CD4-positive, alpha-beta memory T cell (primary cell): ENCODE measurements at regions of chr13 and their contacts with region 1.

Region 1: DNA sequence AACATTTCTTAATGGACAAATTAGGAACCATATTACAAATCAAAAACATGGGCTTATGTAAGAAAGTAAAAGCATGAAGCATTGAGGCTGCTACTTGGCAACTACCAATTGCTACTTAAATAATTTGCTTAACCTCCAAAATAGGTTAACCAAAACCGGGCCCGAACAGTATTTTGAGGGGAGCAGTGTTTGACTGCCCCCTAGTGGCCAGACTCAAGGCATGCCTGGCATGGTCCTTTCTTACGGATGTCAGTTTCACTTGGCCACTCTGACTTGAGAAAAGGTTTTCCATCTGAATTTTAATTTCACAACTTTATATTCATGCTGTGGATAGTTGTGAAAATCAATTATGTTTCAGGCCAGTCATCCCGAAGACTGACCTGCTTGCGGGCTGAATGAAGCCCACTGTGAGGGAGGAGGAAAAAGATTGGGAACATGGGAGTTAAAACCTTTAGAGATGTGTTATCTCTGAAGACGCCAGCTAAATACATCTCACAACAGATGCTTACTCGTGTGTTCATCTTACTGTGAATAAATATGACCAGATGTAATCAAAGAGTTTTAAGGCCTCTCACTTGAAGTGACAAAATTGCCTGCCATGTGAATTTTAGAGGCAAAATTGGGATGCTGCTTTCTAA is 2.9 kb downstream of the RXFP2 start:
- DNase-seq: peak; percentile 58 to 66 (median 61)
- H3K4me3 ChIP-seq: no peak overlapping the region
- H3K4me3 Mint-ChIP-seq: peak overlapping the region in 2 of 8 donors; percentile 37 to 58
- H3K27ac ChIP-seq: no peak overlapping the region
- H3K27ac Mint-ChIP-seq: peak overlapping the region in 4 of 7 donors; percentile 2 to 81 (median 42)
- H3K4me1 ChIP-seq: no peaks in the 10 kb centered on the region
- H3K4me1 Mint-ChIP-seq: peaks cover 3 to 4% (median 3%) of the 10 kb centered on the region in 4 donors
- H3K27me3 ChIP-seq: no peaks in the 10 kb centered on the region
- H3K27me3 Mint-ChIP-seq: peaks cover 8 to 9% of the 10 kb centered on the region in 2 donors

Region 2: DNA sequence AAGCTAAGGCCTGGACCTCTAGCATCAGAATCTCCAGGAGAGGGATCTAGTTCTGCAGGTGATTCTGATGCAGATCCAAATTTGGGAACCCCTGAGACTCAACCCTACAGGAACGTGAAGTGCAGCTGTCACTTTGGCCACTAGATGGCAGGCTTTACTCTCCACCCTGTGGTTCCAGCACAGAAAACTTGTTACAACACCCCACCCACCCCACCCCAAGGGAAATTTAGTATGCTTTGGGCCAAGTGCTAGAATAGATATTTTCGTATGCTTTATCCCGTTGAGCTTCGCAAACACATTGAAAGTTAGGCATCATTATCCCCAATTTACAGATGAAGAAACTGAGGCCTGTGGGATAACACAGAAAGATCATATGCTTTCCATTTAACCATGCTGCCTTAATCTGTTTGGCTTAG is 310.5 kb before region 1 on chr13:
- CTCF ChIA-PET with region 1: interaction called, 18 read pairs
- POLR2A ChIA-PET with region 1: no interaction called
- intact Hi-C with region 1: loop called (anchors 1 kb)
- DNase-seq: peak; percentile 20 to 41 (median 31)
- H3K4me3 ChIP-seq: no peak overlapping the region
- H3K4me3 Mint-ChIP-seq: no peak overlapping the region
- H3K27ac ChIP-seq: no peak overlapping the region
- H3K27ac Mint-ChIP-seq: no peak overlapping the region
- H3K4me1 ChIP-seq: no peaks in the 10 kb centered on the region
- H3K4me1 Mint-ChIP-seq: no peaks in the 10 kb centered on the region
- H3K27me3 ChIP-seq: no peaks in the 10 kb centered on the region
- H3K27me3 Mint-ChIP-seq: peaks cover 0 to 7% of the 10 kb centered on the region in 2 donors